ENCODE measurements at regions of chr12 and their contacts with region 1.

Region 1: GRCh38 chr12:7638760-7639555 is 26.8 kb downstream of the APOBEC1 start:
- DNase-seq: peak; percentile 63 to 79 (median 66)
- ATAC-seq: peak; percentile 96
- H3K4me3 ChIP-seq: no peak overlapping the region
- H3K27ac ChIP-seq: no peak overlapping the region
- H3K4me1 ChIP-seq: no peaks in the 10 kb centered on the region; a peak in 1 of 5 replicates
- H3K27me3 ChIP-seq: no peaks in the 10 kb centered on the region
- CTCF ChIP-seq: peak; percentile 71 to 95 (median 93)
- EP300 ChIP-seq: no peak
- POLR2A ChIP-seq: no peak
- RAD21 ChIP-seq: peak; percentile 89 to 91

Region 2: GRCh38 chr12:7219599-7220243 is 419.2 kb before region 1 on chr12:
- CTCF ChIA-PET with region 1: interaction called, 24 read pairs
- POLR2A ChIA-PET with region 1: no interaction called
- in situ Hi-C with region 1: loop called (anchors 10 kb)
- intact Hi-C with region 1: loop called (anchors 2 kb)
- DNase-seq: peak; percentile 44 to 77 (median 50)
- ATAC-seq: peak; percentile 75
- H3K4me3 ChIP-seq: no peak overlapping the region
- H3K27ac ChIP-seq: no peak overlapping the region
- H3K4me1 ChIP-seq: no peaks in the 10 kb centered on the region
- H3K27me3 ChIP-seq: no peaks in the 10 kb centered on the region
- CTCF ChIP-seq: peak; percentile 77 to 92 (median 91)
- EP300 ChIP-seq: no peak
- POLR2A ChIP-seq: no peak
- RAD21 ChIP-seq: peak; percentile 97 to 99

Region 3: DNA sequence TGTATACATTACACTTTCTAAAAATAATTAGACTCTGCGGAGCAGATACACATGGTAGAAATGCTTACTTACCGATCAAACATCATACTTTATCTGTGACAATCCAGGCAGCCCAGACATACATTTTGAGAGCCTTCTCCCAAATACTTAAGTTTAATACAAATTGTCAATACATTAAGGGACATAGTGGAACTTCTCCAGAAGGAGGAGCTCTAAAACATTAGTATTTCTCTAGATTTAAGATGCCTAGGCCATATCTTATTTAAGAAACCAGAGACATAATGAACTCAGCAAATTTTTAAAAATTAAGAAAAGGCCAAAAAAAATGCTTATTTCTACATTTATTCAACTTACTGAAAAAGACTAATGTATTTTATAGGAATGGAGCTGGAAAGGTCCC is 319.0 kb before region 1 on chr12:
- CTCF ChIA-PET with region 1: no interaction called
- POLR2A ChIA-PET with region 1: no interaction called
- in situ Hi-C with region 1: no loop called
- intact Hi-C with region 1: loop called (anchors 10 kb)
- DNase-seq: no peak
- ATAC-seq: no peak
- H3K4me3 ChIP-seq: no peak overlapping the region
- H3K27ac ChIP-seq: no peak overlapping the region
- H3K4me1 ChIP-seq: peaks cover 0 to 4% of the 10 kb centered on the region in 2 experiments; a peak in 3 of 5 replicates
- H3K27me3 ChIP-seq: no peaks in the 10 kb centered on the region
- CTCF ChIP-seq: no peak
- EP300 ChIP-seq: no peak
- POLR2A ChIP-seq: no peak
- RAD21 ChIP-seq: peak in 1 of 2 experiments; percentile 26; a peak in 2 of 4 replicates

Region 4: DNA sequence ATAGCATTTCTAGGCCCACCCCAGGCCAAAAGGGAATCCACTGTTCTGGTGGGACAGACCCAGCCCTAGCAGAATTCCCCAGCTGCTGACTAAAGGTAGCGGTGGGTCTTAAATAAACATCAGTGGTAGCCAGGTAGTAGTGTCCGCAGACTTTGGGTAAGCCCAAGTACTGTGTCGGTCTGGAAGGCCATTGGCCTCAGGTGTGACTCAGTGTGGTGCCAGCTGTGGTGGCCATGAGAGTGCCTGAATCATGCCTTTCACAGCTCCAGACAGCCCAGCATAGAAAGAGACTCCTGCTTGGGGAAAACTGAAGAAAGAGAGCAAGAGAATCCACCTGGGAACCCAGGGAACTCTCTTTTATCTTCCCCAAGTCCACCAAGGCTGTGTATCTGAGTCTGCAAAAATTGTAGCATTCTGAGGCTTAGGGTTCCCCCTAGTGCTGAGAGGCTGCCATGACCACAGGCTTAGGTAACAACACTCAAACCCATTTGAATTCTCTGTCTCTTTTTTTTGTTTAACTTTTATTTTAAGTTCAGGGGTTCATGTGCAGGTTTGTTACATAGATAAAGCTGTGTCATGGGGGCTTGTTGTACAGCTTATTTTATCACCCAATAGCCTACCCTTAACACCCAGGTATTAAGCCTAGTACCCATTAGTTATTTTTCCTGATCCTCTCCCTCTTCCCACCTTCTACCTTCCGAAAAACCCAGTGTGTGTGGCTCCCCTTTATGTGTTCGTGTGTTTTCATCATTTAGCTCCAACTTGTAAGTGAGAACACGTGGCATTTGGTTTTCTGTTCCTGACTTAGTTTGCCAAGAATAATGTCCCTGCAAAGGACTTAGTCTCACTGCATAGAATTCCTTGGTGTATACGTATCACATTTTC is 178.3 kb before region 1 on chr12:
- CTCF ChIA-PET with region 1: no interaction called
- POLR2A ChIA-PET with region 1: no interaction called
- in situ Hi-C with region 1: no loop called
- intact Hi-C with region 1: loop called (anchors 5 kb)
- DNase-seq: peak; percentile 48 to 66 (median 53)
- ATAC-seq: peak; percentile 92
- H3K4me3 ChIP-seq: no peak overlapping the region
- H3K27ac ChIP-seq: no peak overlapping the region
- H3K4me1 ChIP-seq: no peaks in the 10 kb centered on the region
- H3K27me3 ChIP-seq: no peaks in the 10 kb centered on the region; a peak in 1 of 5 replicates
- CTCF ChIP-seq: peak; percentile 72 to 91 (median 73); a peak in 5 of 6 replicates
- EP300 ChIP-seq: no peak
- POLR2A ChIP-seq: no peak
- RAD21 ChIP-seq: peak; percentile 90 to 96

Region 5: DNA sequence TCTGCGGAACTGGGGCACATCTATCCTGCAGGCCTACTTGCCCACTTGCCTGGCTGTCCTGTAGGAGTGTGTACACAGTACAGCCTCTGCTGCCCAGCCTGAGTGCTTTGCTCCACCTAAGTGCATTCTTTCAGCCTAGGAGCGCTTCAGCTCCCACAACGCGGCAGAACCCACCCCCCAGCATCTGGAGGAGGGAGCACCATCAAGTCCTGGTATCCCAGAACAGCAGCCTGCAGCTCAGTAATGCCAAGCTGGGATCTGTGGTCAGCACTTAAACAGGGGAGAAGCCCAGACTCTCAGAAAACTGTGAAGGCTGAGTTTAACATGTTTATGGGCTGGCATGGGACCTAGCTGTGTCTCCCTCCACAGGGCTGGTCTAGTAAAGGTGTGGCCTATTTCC is 55.4 kb before region 1 on chr12:
- CTCF ChIA-PET with region 1: interaction called, 14 read pairs
- POLR2A ChIA-PET with region 1: no interaction called
- in situ Hi-C with region 1: no loop called
- intact Hi-C with region 1: loop called (anchors 1 kb)
- DNase-seq: no peak
- ATAC-seq: no peak
- H3K4me3 ChIP-seq: no peak overlapping the region
- H3K27ac ChIP-seq: no peak overlapping the region
- H3K4me1 ChIP-seq: no peaks in the 10 kb centered on the region
- H3K27me3 ChIP-seq: no peaks in the 10 kb centered on the region
- CTCF ChIP-seq: no peak
- EP300 ChIP-seq: no peak
- POLR2A ChIP-seq: no peak
- RAD21 ChIP-seq: no peak

Measured in K562 (cell line).